ENCODE measurements at regions of chr2 and their contacts with region 1.

Region 1: GRCh38 chr2:218395797-218396687 is 3.6 kb upstream of the CTDSP1 start:
- DNase-seq: peak; percentile 95 to 98 (median 95)
- ATAC-seq: peak; percentile 70 to 80 (median 74)
- H3K4me3 ChIP-seq: peak overlapping the region; percentile 63 to 100 (median 96)
- H3K27ac ChIP-seq: peak overlapping the region; percentile 99 to 100 (median 100)
- H3K4me1 ChIP-seq: peaks cover 0 to 52% (median 28%) of the 10 kb centered on the region in 12 donors
- H3K27me3 ChIP-seq: no peaks in the 10 kb centered on the region
- CTCF ChIP-seq: peak; percentile 83 to 99 (median 94)
- POLR2A ChIP-seq: peak in 1 of 2 donors; percentile 59

Region 2: GRCh38 chr2:217858519-217859491 is 537.2 kb before region 1 on chr2:
- intact Hi-C with region 1: no loop called
- DNase-seq: peak; percentile 88 to 94 (median 91)
- ATAC-seq: peak; percentile 82 to 84 (median 82)
- H3K4me3 ChIP-seq: peak overlapping the region in 11 of 12 donors; percentile 19 to 72 (median 55)
- H3K27ac ChIP-seq: peak overlapping the region; percentile 74 to 99 (median 90)
- H3K4me1 ChIP-seq: peaks cover 9 to 95% (median 74%) of the 10 kb centered on the region in 12 donors
- H3K27me3 ChIP-seq: no peaks in the 10 kb centered on the region
- CTCF ChIP-seq: no peak
- POLR2A ChIP-seq: peak in 1 of 2 donors; percentile 35

Region 3: DNA sequence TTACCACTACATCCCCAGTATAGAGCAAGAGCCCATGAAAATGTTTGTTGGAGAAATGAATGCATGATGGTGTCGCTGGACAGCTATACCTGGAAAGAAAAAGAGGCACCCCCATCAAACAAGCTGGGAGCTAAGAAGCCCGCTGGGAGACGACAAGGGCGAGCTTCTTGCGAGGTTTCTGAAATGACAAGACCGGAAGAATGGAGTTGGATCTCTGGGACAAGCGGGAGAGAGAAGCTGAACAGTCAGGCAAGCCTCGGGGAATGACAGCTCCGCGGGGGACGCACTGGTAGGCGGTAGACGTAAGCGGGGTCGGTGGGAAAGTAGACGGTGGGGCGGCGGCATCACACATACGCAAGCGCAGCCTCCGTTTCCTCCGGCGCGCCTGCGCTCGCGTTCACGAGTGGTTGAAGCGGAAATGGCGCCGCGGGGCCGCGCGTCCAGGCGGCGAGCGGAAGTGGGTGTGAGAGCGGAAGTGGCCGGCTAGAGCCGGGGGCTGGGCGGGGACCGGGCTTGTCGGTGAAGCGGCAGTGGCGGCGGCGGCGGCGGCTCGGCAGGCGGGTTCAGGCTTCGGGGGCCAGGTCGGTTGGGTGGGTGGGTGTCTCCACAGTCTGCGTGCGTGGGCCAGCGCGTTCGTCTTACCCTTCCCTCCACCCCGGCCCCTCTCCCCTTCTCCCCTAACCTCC is 179.2 kb before region 1 on chr2 and contains the start of gene ARPC2:
- intact Hi-C with region 1: loop called in 1 of 10 experiments (anchors 5 kb)
- DNase-seq: peak; percentile 96 to 97 (median 97)
- ATAC-seq: peak; percentile 92 to 98 (median 98)
- H3K4me3 ChIP-seq: peak within 1 kb of the TSS; percentile 62 to 99 (median 96)
- H3K27ac ChIP-seq: peak within 1 kb of the TSS; percentile 84 to 98 (median 96)
- H3K4me1 ChIP-seq: peaks cover 0 to 55% (median 39%) of the 10 kb centered on the region in 12 donors
- H3K27me3 ChIP-seq: no peaks in the 10 kb centered on the region
- CTCF ChIP-seq: peak in 1 of 12 donors; percentile 10
- POLR2A ChIP-seq: peak in 1 of 2 donors; percentile 85
- total RNA-seq, gene ARPC2: 126 to 278 (median 139) TPM

Region 4: DNA sequence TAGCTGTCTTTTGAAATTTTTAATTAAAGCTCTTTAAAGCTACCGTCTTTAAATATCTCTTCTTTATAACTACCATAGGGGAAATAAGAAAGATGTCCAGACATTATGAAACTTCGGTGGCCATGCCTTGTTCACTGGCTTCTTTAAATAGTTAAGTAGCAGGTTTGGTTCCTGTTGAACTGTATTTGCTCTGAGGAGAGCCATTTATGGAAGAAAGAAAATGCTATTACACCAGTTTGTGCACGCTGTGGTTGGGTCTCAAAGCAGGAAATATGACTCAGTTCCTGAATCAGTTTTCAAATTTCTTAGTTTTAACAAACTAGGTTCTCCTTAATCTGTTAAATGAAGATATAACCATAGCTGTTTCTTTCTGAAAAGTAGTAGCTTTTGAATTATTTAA is 166.8 kb before region 1 on chr2:
- intact Hi-C with region 1: no loop called
- DNase-seq: no peak
- ATAC-seq: peak in 3 of 4 donors; percentile 76 to 90 (median 88)
- H3K4me3 ChIP-seq: peak overlapping the region in 2 of 12 donors; percentile 3 to 22
- H3K27ac ChIP-seq: peak overlapping the region in 11 of 12 donors; percentile 3 to 86 (median 47)
- H3K4me1 ChIP-seq: peaks cover 8 to 84% (median 31%) of the 10 kb centered on the region in 12 donors
- H3K27me3 ChIP-seq: no peaks in the 10 kb centered on the region
- CTCF ChIP-seq: no peak
- POLR2A ChIP-seq: no peak

Region 5: DNA sequence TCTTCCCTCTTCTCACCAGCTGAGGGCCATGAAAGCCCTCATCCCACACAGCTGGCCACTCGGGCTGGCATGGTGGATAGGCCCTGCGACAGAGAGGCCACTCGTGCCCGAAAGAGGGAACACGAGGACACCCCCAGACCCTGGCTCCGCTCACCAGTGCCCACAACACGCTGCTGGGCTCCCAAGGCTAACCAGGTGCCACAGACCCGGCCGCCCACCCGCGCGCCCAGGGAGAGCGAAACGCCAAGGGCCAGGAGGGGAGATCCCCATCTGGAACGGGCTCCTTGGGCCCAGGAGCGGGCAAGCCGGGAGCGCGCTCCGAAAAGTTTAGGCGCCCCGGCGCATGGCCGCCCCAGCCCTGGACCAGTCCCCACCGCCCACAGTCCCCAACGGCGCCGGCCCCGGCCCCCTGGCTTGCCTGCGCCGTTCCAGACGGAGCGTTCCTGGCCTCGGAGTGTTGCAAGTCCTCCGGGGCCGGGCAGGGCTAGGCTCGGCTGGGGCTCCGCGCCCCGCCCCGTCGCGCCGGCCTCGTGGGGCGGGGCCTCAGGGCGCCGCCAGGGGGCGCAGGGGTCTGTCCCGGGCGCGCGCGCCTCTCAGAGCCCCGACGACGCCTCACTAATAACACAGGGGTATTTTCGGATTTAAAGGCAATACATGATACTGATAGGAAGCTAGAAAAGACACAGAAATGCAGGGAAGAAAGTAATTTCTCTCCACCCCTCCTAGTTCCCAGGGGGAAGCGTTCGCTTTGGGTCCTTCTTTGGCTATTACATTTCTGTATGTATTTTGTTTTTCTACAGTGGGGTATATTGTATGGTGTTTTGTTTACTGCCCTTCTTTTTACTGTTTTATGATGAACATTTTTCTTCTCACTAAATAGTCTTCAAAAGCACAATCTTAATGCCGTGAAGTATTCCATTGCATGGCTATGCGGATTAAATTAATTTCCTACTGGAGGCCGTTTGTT is 103.7 kb before region 1 on chr2 and contains the start of gene TMBIM1:
- intact Hi-C with region 1: loop called in 5 of 10 experiments (anchors 2 to 5 kb)
- DNase-seq: peak; percentile 83 to 92 (median 87)
- ATAC-seq: peak; percentile 68 to 92 (median 86)
- H3K4me3 ChIP-seq: peak within 1 kb of the TSS; percentile 74 to 98 (median 90)
- H3K27ac ChIP-seq: peak within 1 kb of the TSS; percentile 90 to 100 (median 96)
- H3K4me1 ChIP-seq: peaks cover 2 to 71% (median 49%) of the 10 kb centered on the region in 12 donors
- H3K27me3 ChIP-seq: no peaks in the 10 kb centered on the region
- CTCF ChIP-seq: peak; percentile 63 to 99 (median 96)
- POLR2A ChIP-seq: peak; percentile 50 to 93
- total RNA-seq, gene TMBIM1: 89.1 to 173 (median 126) TPM

Region 6: GRCh38 chr2:218367415-218368153 is 28.5 kb before region 1 on chr2:
- intact Hi-C with region 1: loop called in 2 of 10 experiments (anchors 1 to 2 kb)
- DNase-seq: peak; percentile 93 to 97 (median 94)
- ATAC-seq: peak; percentile 88 to 97 (median 96)
- H3K4me3 ChIP-seq: peak overlapping the region; percentile 12 to 72 (median 59)
- H3K27ac ChIP-seq: peak overlapping the region; percentile 75 to 98 (median 92)
- H3K4me1 ChIP-seq: peaks cover 0 to 48% (median 11%) of the 10 kb centered on the region in 12 donors
- H3K27me3 ChIP-seq: no peaks in the 10 kb centered on the region
- CTCF ChIP-seq: peak in 5 of 12 donors; percentile 9 to 32 (median 10)
- POLR2A ChIP-seq: peak; percentile 56 to 94

Region 7: DNA sequence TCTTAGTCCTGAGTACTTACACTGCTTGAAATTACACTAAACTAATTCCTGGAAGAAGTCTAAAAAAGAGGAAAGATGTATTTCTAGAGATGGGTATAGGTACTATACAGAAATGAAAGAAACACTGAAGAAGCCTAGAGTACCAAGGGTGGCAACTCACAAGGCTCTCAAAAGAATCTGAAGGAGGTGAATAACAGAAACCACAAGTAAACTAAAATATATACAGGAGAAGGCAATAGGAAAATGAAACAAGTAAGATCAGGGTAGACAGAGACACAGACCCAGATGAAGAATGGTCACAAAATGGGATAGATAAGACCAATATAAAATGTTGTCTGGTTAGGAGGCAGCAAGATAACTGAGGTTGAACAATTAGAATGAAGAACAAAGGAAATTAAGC is 112.3 kb after region 1 on chr2:
- intact Hi-C with region 1: no loop called
- DNase-seq: no peak
- ATAC-seq: no peak
- H3K4me3 ChIP-seq: no peak overlapping the region
- H3K27ac ChIP-seq: no peak overlapping the region
- H3K4me1 ChIP-seq: no peaks in the 10 kb centered on the region
- H3K27me3 ChIP-seq: no peaks in the 10 kb centered on the region
- CTCF ChIP-seq: no peak
- POLR2A ChIP-seq: no peak